Common myeloid progenitor, CD34-positive (primary cell): ENCODE measurements at regions of chr11 and their contacts with region 1.

Region 1: GRCh38 chr11:123261345-123262106 is 66.5 kb upstream of the CLMP start:
- DNase-seq: peak; percentile 56 to 76 (median 73)
- H3K4me3 ChIP-seq: peak overlapping the region in 2 of 7 experiments; percentile 61 to 65
- H3K27ac ChIP-seq: no peak overlapping the region
- H3K4me1 ChIP-seq: peaks cover 8 to 35% (median 23%) of the 10 kb centered on the region in 4 experiments
- H3K27me3 ChIP-seq: no peaks in the 10 kb centered on the region

Region 2: DNA sequence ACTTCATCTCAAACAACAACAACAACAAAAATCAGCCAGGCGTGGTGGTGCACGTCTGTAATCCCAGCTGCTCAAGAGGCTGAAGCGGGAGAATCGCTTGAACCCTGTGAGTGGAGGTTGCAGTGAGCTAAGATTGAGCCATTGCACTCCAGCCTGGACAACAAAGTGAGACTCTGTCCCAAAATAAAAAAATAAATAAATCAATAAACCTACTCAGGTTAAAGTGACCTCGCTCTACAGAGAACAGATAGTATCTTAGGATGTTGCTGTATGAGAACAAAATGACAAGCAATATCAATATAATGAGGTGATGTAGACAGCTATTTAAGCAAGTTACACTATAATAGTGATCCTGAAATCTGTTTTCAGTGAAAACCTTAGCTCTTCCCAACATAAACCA is 165.2 kb before region 1 on chr11:
- CTCF ChIA-PET with region 1: interaction called, 11 read pairs
- POLR2A ChIA-PET with region 1: no interaction called
- DNase-seq: no peak
- H3K4me3 ChIP-seq: no peak overlapping the region
- H3K27ac ChIP-seq: no peak overlapping the region
- H3K4me1 ChIP-seq: no peaks in the 10 kb centered on the region
- H3K27me3 ChIP-seq: peaks cover 0 to 2% (median 0%) of the 10 kb centered on the region in 5 experiments

Region 3: DNA sequence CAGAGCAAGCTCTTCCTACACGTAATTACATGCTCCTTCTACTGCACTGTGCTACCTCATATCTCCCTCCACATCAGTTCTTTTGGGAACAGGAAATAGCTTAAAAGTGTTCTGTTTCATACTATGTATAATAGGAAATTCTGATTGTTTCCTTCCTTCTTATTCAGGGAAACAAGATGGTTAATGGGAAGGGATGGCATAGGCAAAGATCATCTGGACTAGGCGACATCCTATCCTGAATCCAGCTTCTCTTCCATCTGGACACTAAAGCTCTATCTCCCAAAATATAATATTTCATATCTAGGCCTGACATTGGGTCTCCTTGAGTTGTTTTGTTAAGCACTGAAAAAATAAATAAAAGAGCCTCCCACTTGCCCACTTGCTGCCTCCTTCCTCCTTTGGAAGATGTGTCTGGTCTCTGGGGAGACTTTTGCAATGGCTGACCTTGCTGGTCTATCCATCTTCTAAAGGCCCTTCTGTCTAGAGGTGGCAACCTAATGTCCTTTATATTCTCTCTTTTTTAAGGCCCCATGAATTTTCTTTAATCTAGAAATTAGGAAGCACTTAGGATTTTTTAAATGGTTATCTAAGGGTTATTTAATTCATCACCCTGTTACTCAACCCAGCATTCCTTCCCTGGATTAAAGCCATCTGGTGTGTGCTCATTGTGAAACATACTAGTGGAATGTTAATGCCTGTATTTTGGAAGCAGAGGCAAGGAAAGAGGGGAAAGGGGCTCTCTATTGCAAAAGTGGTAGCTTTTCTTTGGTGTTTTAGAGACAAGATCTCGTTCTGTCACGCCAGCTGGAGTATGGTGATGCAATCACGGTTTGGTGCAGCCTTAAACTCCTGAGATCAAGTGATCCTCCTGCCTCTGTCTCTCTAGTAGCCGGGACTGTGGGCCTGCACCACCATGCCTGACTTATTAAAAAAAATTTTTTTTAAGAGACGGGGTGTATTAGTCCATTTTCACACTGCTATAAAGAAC is 87.0 kb before region 1 on chr11:
- CTCF ChIA-PET with region 1: no interaction called
- POLR2A ChIA-PET with region 1: no interaction called
- DNase-seq: no peak
- H3K4me3 ChIP-seq: no peak overlapping the region
- H3K27ac ChIP-seq: no peak overlapping the region
- H3K4me1 ChIP-seq: peaks cover 0 to 4% (median 0%) of the 10 kb centered on the region in 4 experiments
- H3K27me3 ChIP-seq: no peaks in the 10 kb centered on the region